Spleen (tissue), 13 donors: ENCODE measurements at regions of chr18 and their contacts with region 1.

Region 1: DNA sequence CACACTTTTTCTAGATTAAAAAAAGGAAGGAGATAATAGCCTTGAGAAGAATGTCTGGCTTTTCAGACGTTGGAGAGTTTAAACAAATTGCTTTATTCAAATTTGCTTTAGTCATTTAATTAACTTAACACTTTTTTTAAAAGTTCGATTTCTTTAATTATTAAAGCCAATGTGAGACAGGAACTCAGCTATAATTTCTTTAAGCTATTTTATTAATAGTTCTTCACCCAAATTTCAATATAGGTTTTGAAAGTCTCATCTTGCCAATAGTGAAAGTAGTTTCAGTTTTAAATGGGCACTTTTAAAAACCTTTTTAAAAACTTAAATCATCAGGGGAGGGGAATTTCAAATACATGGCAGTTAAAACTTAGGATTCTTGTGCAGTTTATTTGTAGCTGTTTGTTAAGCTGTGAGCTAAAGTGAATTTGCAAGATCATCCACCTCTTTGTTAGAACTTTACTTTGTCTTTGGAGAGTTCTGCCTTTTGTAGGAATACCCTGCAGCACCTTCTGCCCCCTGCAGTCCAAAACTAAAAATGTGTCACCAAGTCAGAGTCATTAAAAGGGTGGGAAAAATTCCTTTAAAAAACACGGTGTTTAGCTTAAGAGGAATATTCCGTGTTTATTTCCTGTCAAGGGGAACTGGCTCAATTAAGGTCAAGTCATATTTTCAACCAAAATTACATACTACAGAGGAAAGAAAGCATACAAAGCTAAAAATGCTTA is 4.6 kb downstream of the TGIF1 start:
- DNase-seq: no peak
- H3K4me3 ChIP-seq: peak overlapping the region; percentile 2 to 80 (median 70)
- H3K27ac ChIP-seq: peak overlapping the region; percentile 94 to 99 (median 99)
- H3K4me1 ChIP-seq: peaks cover 8 to 89% (median 64%) of the 10 kb centered on the region in 6 donors
- H3K27me3 ChIP-seq: no peaks in the 10 kb centered on the region
- CTCF ChIP-seq: peak; percentile 34 to 79 (median 67)
- POLR2A ChIP-seq: peak in 1 of 3 donors; percentile 22

Region 2: DNA sequence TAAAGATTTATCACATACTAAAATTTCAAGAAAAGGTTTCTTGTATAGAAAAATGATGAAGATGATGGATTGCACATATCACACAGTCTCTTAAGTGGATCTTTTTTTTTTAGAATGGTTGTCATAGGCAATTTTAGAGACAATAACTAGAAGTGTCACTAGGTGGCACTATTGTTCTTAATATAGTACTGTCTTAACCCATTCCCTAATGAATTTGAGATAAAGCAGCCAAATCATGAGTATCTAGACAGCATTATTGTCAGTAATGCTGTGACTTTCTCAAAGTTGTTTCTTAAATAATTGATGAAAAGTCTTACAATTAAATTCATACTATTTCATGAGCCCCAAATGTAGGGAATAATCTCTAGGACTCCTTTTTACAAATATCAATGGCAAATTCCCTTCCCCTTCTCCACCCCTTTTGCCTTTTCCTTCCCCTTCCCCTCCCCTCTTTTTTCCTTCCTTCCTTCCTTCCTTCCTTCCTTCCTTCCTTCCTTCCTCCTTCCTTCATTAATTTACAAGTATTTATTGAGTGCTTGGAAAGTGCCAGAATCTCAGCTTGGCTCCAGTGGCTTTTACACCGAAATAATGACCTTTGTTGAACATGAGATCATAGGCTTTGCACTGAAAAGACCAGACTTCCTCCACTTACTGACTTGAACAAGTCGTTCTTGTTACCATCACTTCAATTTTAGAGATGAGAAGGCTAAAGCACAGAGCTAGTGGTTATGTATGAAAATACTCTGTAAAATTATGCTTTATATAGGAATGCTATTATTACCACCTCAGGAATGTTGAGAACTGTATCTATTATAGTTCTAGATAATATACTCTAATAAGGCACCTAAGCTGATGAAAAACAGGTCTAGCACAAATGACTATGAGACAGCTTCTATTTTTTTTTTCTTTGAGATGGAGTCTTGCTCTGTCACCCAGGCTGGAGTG is 172.8 kb before region 1 on chr18:
- intact Hi-C with region 1: loop called (anchors 5 kb)
- DNase-seq: no peak
- H3K4me3 ChIP-seq: no peak overlapping the region
- H3K27ac ChIP-seq: peak overlapping the region in 2 of 8 donors; percentile 24 to 65
- H3K4me1 ChIP-seq: peaks cover 0 to 47% (median 24%) of the 10 kb centered on the region in 6 donors
- H3K27me3 ChIP-seq: no peaks in the 10 kb centered on the region
- CTCF ChIP-seq: peak; percentile 52 to 87 (median 71)
- POLR2A ChIP-seq: no peak

Region 3: DNA sequence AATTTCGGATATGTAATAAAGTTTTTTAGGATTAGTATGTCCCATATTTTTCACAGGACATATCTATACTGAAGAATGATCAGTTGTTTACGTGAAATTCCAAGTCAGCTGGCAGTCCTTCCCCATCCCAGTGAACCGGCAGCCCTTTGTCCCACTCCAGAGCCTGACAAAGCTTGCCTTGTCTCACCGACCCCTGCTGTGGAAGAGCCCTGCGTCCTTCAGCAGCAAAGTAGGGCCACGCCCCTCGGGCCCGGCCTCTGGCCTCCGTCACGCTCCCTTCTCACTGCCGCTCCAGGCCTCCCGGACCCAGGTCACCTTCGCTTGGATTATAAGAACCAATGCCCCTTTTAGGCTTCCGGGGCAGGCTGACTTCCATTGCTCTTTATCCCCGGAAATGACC is 94.3 kb before region 1 on chr18:
- intact Hi-C with region 1: no loop called
- DNase-seq: no peak
- H3K4me3 ChIP-seq: no peak overlapping the region
- H3K27ac ChIP-seq: no peak overlapping the region
- H3K4me1 ChIP-seq: no peaks in the 10 kb centered on the region
- H3K27me3 ChIP-seq: no peaks in the 10 kb centered on the region
- CTCF ChIP-seq: no peak
- POLR2A ChIP-seq: no peak

Region 4: GRCh38 chr18:3511922-3512372 is 57.4 kb after region 1 on chr18:
- intact Hi-C with region 1: no loop called
- DNase-seq: no peak
- H3K4me3 ChIP-seq: no peak overlapping the region
- H3K27ac ChIP-seq: peak overlapping the region in 1 of 8 donors; percentile 3
- H3K4me1 ChIP-seq: peaks cover 0 to 2% (median 0%) of the 10 kb centered on the region in 6 donors
- H3K27me3 ChIP-seq: no peaks in the 10 kb centered on the region
- CTCF ChIP-seq: no peak
- POLR2A ChIP-seq: no peak